CD4-positive, alpha-beta memory T cell (primary cell): ENCODE measurements at regions of chr4 and their contacts with region 1.

Region 1: GRCh38 chr4:153466081-153466948 is at the start of gene TMEM131L:
- DNase-seq: peak; percentile 66 to 81 (median 73)
- H3K4me3 ChIP-seq: peak within 1 kb of the TSS; percentile 79 to 86
- H3K4me3 Mint-ChIP-seq: peak within 1 kb of the TSS; percentile 89 to 99 (median 98)
- H3K27ac ChIP-seq: peak within 1 kb of the TSS; percentile 76
- H3K27ac Mint-ChIP-seq: peak within 1 kb of the TSS; percentile 95 to 100 (median 98)
- H3K4me1 ChIP-seq: peaks cover 37% of the 10 kb centered on the region
- H3K4me1 Mint-ChIP-seq: peaks cover 30 to 60% (median 36%) of the 10 kb centered on the region in 4 donors
- H3K27me3 ChIP-seq: no peaks in the 10 kb centered on the region
- H3K27me3 Mint-ChIP-seq: no peaks in the 10 kb centered on the region
- total RNA-seq, gene TMEM131L: 62.5 to 65.6 TPM

Region 2: GRCh38 chr4:153344131-153345010 is 121.9 kb before region 1 on chr4 and contains the start of gene MND1:
- CTCF ChIA-PET with region 1: interaction called, 9 read pairs
- POLR2A ChIA-PET with region 1: interaction called, 6 read pairs
- intact Hi-C with region 1: loop called (anchors 1 kb)
- DNase-seq: peak; percentile 87 to 89 (median 88)
- H3K4me3 ChIP-seq: peak within 1 kb of the TSS; percentile 86
- H3K4me3 Mint-ChIP-seq: peak within 1 kb of the TSS; percentile 90 to 98 (median 93)
- H3K27ac ChIP-seq: peak within 1 kb of the TSS; percentile 54
- H3K27ac Mint-ChIP-seq: peak within 1 kb of the TSS in 6 of 7 donors; percentile 7 to 86 (median 73)
- H3K4me1 ChIP-seq: peaks cover 11% of the 10 kb centered on the region
- H3K4me1 Mint-ChIP-seq: peaks cover 7 to 25% (median 18%) of the 10 kb centered on the region in 4 donors
- H3K27me3 ChIP-seq: no peaks in the 10 kb centered on the region
- H3K27me3 Mint-ChIP-seq: no peaks in the 10 kb centered on the region
- total RNA-seq, gene MND1: not detected

Region 3: DNA sequence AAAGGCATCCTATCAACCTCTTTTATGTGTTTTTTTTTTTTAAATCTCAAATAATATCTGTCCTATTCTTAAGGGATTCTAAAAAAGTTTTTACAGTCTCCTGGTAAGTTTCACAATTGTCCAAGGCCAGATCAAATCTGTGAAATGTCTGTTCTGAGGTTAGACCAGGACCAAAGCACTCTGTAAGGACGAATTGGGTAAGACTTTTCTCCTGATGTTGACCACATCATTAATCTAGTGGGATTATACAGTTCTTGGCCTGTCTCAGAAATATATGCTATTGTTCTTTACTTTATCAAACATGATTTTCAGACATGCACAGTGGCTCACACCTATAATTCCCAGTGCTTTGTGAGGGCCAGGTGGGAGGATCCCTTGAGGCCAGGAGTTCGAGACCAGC is 46.0 kb before region 1 on chr4:
- CTCF ChIA-PET with region 1: no interaction called
- POLR2A ChIA-PET with region 1: no interaction called
- intact Hi-C with region 1: no loop called
- DNase-seq: no peak
- H3K4me3 ChIP-seq: no peak overlapping the region
- H3K4me3 Mint-ChIP-seq: no peak overlapping the region
- H3K27ac ChIP-seq: no peak overlapping the region
- H3K27ac Mint-ChIP-seq: no peak overlapping the region
- H3K4me1 ChIP-seq: peaks cover 17% of the 10 kb centered on the region
- H3K4me1 Mint-ChIP-seq: peaks cover under 1 to 12% (median 4%) of the 10 kb centered on the region in 4 donors
- H3K27me3 ChIP-seq: no peaks in the 10 kb centered on the region
- H3K27me3 Mint-ChIP-seq: no peaks in the 10 kb centered on the region

Region 4: GRCh38 chr4:153438916-153439756 is 27.2 kb before region 1 on chr4:
- CTCF ChIA-PET with region 1: interaction called, 100 read pairs
- POLR2A ChIA-PET with region 1: interaction called, 48 read pairs
- intact Hi-C with region 1: loop called (anchors 1 kb)
- DNase-seq: peak; percentile 45 to 60 (median 55)
- H3K4me3 ChIP-seq: peak overlapping the region; percentile 55 to 60
- H3K4me3 Mint-ChIP-seq: peak overlapping the region; percentile 76 to 95 (median 88)
- H3K27ac ChIP-seq: peak overlapping the region; percentile 72
- H3K27ac Mint-ChIP-seq: peak overlapping the region; percentile 73 to 97 (median 94)
- H3K4me1 ChIP-seq: peaks cover 36% of the 10 kb centered on the region
- H3K4me1 Mint-ChIP-seq: peaks cover 18 to 45% (median 31%) of the 10 kb centered on the region in 4 donors
- H3K27me3 ChIP-seq: no peaks in the 10 kb centered on the region
- H3K27me3 Mint-ChIP-seq: no peaks in the 10 kb centered on the region

Region 5: DNA sequence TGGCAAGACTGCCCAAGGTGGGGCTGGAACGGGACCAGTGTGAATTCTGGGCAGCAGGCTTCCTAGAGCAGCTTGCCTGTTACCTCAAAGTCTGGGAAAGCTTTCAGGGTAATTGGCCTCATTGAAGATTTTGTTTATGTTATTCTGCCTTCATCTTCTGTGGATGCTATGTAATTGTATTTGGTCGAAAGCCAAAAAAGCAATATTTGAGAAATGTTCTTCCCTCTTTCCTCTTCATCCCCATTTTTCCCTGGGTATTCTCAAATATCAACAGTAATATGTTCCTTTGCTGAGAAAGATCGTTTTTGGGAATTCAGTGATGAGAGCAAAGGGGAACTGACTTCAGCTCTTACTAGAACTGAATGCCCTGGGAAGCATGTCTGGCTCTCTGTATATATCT is 12.8 kb after region 1 on chr4:
- CTCF ChIA-PET with region 1: interaction called, 25 read pairs
- POLR2A ChIA-PET with region 1: interaction called, 26 read pairs
- intact Hi-C with region 1: no loop called
- DNase-seq: no peak
- H3K4me3 ChIP-seq: no peak overlapping the region
- H3K4me3 Mint-ChIP-seq: peak overlapping the region in 2 of 8 donors; percentile 45 to 72
- H3K27ac ChIP-seq: no peak overlapping the region
- H3K27ac Mint-ChIP-seq: peak overlapping the region; percentile 24 to 83 (median 71)
- H3K4me1 ChIP-seq: peaks cover 65% of the 10 kb centered on the region
- H3K4me1 Mint-ChIP-seq: peaks cover 58 to 79% (median 67%) of the 10 kb centered on the region in 4 donors
- H3K27me3 ChIP-seq: no peaks in the 10 kb centered on the region
- H3K27me3 Mint-ChIP-seq: no peaks in the 10 kb centered on the region

Region 6: GRCh38 chr4:153497988-153498967 is 32.0 kb after region 1 on chr4:
- CTCF ChIA-PET with region 1: interaction called, 34 read pairs
- POLR2A ChIA-PET with region 1: interaction called, 546 read pairs
- intact Hi-C with region 1: loop called (anchors 1 kb)
- DNase-seq: no peak
- H3K4me3 ChIP-seq: peak overlapping the region in 1 of 2 donors; percentile 38
- H3K4me3 Mint-ChIP-seq: peak overlapping the region; percentile 57 to 85 (median 80)
- H3K27ac ChIP-seq: peak overlapping the region; percentile 64
- H3K27ac Mint-ChIP-seq: peak overlapping the region; percentile 94 to 99 (median 97)
- H3K4me1 ChIP-seq: peaks cover 98% of the 10 kb centered on the region
- H3K4me1 Mint-ChIP-seq: peaks cover 76 to 100% (median 86%) of the 10 kb centered on the region in 4 donors
- H3K27me3 ChIP-seq: no peaks in the 10 kb centered on the region
- H3K27me3 Mint-ChIP-seq: no peaks in the 10 kb centered on the region

Region 7: DNA sequence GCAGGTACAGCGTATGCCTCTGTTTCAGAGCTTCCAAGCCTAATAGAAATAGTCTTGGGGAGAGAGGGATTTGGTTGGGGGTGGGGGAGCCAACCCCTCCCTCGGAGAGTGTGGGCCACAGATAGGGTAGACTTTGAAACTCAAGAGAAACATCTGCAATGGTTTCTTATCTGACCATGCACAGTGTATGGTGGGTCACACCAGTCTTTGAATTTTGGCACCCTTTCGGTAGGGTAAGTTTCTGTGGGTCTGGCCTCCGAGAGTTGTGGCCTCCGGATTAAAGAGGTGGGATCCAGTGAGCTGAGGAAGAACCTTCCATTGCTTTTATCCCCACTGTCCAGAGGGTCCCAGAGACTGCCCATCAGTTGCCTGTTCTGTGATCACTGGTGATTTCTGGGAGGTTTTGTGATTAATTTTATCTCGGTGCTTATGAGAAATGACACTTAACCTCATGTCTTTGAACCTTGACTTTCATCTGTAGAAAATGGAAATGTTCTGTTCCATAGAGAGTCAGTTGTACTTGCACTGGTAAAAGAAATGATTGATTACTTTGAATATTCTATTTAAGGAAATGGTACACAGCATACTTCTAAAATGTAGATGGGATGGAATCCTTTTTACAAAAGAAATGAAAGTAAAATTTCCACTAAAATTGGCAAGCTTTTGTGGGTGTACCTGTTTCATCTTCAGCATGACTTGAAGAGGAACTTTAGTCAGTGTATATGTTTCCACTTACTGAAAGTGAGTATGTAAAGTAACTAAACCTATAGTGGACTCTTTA is 62.6 kb after region 1 on chr4:
- CTCF ChIA-PET with region 1: interaction called, 13 read pairs
- POLR2A ChIA-PET with region 1: interaction called, 43 read pairs
- intact Hi-C with region 1: loop called (anchors 1 kb)
- DNase-seq: no peak
- H3K4me3 ChIP-seq: peak overlapping the region; percentile 23 to 37
- H3K4me3 Mint-ChIP-seq: peak overlapping the region; percentile 11 to 87 (median 80)
- H3K27ac ChIP-seq: peak overlapping the region; percentile 54
- H3K27ac Mint-ChIP-seq: peak overlapping the region; percentile 75 to 94 (median 90)
- H3K4me1 ChIP-seq: peaks cover 98% of the 10 kb centered on the region
- H3K4me1 Mint-ChIP-seq: peaks cover 70 to 93% (median 85%) of the 10 kb centered on the region in 4 donors
- H3K27me3 ChIP-seq: no peaks in the 10 kb centered on the region
- H3K27me3 Mint-ChIP-seq: no peaks in the 10 kb centered on the region

Region 8: DNA sequence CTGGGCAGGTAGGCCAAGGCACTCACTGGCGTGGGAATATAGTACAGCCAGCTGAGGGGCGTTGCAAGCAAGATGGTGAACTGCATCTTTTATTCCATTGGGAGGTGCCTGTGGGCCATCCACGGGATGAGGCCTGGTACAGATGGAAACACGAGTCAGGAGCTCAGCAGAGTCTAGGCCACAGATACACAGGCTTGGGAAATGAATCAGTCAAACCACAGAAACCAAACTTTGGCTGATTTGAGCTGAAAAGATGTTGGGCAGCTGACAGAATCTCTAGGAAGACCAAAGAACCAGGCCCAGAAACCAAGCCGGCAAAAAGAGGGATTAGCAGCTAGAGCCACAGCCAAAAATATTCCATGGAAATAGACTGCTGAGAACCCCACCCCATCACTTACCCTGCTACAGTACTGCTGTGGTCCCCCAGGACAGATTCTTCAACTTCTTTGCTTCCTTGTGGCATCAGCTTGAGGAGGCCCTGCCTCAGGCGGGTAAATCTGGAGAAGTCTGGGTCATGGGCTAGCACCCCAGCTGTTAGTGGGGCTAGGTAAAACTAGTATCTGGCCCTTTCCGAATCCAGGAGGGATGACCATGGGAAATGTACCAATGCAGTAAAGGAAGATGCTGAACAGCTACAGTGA is 75.3 kb after region 1 on chr4:
- CTCF ChIA-PET with region 1: interaction called, 13 read pairs
- POLR2A ChIA-PET with region 1: interaction called, 30 read pairs
- intact Hi-C with region 1: no loop called
- DNase-seq: no peak
- H3K4me3 ChIP-seq: no peak overlapping the region
- H3K4me3 Mint-ChIP-seq: peak overlapping the region in 7 of 8 donors; percentile 17 to 77 (median 41)
- H3K27ac ChIP-seq: no peak overlapping the region
- H3K27ac Mint-ChIP-seq: peak overlapping the region; percentile 33 to 87 (median 75)
- H3K4me1 ChIP-seq: peaks cover 78% of the 10 kb centered on the region
- H3K4me1 Mint-ChIP-seq: peaks cover 51 to 87% (median 74%) of the 10 kb centered on the region in 4 donors
- H3K27me3 ChIP-seq: no peaks in the 10 kb centered on the region
- H3K27me3 Mint-ChIP-seq: no peaks in the 10 kb centered on the region